ENCODE measurements at regions of chr3 and their contacts with region 1.

Region 1: DNA sequence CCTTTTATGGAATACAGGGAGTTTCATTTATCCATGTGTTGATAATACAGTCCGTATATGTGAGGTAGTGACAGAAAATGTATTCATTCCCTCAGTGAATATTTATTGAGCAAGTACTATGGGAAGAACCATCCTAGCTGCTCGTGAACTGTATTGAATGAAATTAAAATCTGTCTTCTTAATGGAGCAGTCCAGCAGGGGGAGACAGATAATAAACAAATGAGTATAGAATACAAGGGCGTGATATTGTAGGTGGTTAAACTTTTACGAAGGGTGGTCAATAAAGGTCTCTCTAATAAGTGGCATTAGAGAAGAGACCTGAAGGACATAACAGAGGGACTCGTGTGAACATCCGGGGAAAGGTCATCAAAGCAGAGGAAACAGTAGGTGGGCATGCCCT is 62.7 kb upstream of the OSTN start:
- DNase-seq: no peak
- ATAC-seq: peak; percentile 70
- H3K4me3 ChIP-seq: no peak overlapping the region
- H3K27ac ChIP-seq: no peak overlapping the region
- H3K4me1 ChIP-seq: peaks cover 24% of the 10 kb centered on the region
- H3K27me3 ChIP-seq: no peaks in the 10 kb centered on the region
- CTCF ChIP-seq: peak; percentile 43 to 51 (median 46); a peak in 4 of 6 replicates
- EP300 ChIP-seq: no peak
- POLR2A ChIP-seq: no peak
- RAD21 ChIP-seq: peak; percentile 76

Region 2: GRCh38 chr3:191066669-191067068 is 69.7 kb before region 1 on chr3:
- CTCF ChIA-PET with region 1: no interaction called
- POLR2A ChIA-PET with region 1: no interaction called
- RAD21 ChIA-PET with region 1: no interaction called
- SMC1A ChIA-PET with region 1: no interaction called
- in situ Hi-C with region 1: no loop called
- intact Hi-C with region 1: no loop called
- DNase-seq: peak; percentile 4
- ATAC-seq: no peak
- H3K4me3 ChIP-seq: no peak overlapping the region
- H3K27ac ChIP-seq: no peak overlapping the region
- H3K4me1 ChIP-seq: no peaks in the 10 kb centered on the region
- H3K27me3 ChIP-seq: no peaks in the 10 kb centered on the region
- CTCF ChIP-seq: no peak
- EP300 ChIP-seq: no peak
- POLR2A ChIP-seq: no peak
- RAD21 ChIP-seq: no peak

Region 3: DNA sequence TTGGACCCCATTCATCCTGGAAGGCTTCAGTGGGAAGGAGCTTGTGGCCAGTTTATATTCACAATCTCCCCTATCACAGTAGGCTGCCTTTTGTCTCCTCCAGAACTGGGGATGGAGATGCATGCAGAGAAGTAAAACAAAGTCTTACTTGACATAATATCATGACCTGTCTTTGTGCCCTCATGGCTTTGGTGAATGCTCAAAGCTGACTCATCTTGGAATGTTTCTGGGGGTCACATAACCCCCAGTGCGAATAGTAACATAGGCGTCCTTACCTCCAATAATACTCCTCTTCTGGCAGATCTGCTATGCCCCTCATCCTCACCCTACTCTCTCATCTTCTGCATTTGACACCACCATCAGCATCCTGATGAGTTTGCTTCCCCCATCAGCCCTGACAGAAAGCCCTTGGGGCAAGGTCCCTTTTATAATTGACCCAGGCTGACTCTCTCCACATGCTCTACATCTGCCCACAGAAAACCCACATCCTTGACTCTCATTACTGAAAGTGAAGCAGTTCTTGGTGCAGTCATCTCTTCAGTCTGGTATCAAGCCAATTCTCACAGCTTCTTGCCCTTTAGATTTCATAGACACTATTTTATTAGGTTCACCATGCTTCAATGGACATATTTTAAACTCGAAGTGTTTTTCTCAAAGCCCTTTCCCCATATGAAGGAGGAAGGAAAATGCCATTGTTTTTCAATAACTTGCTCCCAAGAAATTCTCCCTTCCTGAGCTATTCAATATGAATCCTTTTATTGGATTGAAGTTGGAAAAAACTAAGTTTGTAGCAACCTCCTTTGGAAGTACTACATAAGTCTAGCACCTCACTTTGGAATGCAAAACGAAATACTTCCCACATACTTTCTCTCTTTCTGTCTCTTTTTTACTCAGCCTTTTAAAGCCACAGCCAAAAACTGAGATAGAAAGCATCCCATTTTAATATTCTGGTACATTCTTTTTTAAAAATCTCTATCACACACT is 99.3 kb after region 1 on chr3:
- CTCF ChIA-PET with region 1: interaction called, 5 read pairs
- POLR2A ChIA-PET with region 1: interaction called, 3 read pairs
- RAD21 ChIA-PET with region 1: interaction called, 4 read pairs
- SMC1A ChIA-PET with region 1: interaction called, 5 read pairs
- in situ Hi-C with region 1: loop called (anchors 5 kb)
- intact Hi-C with region 1: loop called (anchors 2 kb)
- DNase-seq: peak; percentile 90
- ATAC-seq: peak; percentile 98
- H3K4me3 ChIP-seq: no peak overlapping the region
- H3K27ac ChIP-seq: peak overlapping the region; percentile 17; the same call in 1 of the 2 replicates
- H3K4me1 ChIP-seq: peaks cover 19% of the 10 kb centered on the region; the same call in 1 of the 2 replicates
- H3K27me3 ChIP-seq: no peaks in the 10 kb centered on the region
- CTCF ChIP-seq: no peak
- EP300 ChIP-seq: peak; percentile 64 to 68; a peak in 2 of 4 replicates
- POLR2A ChIP-seq: no peak
- RAD21 ChIP-seq: peak; percentile 30; the same call in 1 of the 2 replicates

Region 4: DNA sequence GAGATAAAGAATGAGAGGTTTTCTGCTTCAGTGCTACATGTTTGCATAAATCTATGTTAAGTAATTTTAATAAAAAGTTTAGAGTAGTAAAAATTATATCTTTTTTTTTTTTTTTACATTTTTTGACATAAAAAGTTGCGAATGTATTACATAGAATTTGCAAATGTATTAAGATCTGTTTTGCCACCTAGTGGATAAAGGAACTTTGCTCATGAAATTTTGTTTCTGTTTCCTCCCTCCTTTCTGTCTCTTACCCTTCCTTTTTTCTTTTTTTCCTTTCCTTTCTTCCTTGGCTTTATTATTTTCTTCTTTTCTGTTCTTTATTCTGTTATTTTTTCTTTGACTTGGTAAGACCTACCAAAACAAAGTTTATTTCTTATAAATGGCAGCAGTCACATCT is 252.5 kb after region 1 on chr3:
- CTCF ChIA-PET with region 1: interaction called, 5 read pairs
- POLR2A ChIA-PET with region 1: no interaction called
- RAD21 ChIA-PET with region 1: interaction called, 7 read pairs
- SMC1A ChIA-PET with region 1: interaction called, 6 read pairs
- in situ Hi-C with region 1: no loop called
- intact Hi-C with region 1: loop called (anchors 5 kb)
- DNase-seq: no peak
- ATAC-seq: no peak
- H3K4me3 ChIP-seq: no peak overlapping the region
- H3K27ac ChIP-seq: no peak overlapping the region
- H3K4me1 ChIP-seq: no peaks in the 10 kb centered on the region
- H3K27me3 ChIP-seq: no peaks in the 10 kb centered on the region
- CTCF ChIP-seq: peak in 2 of 3 experiments; percentile 21 to 38; a peak in 2 of 6 replicates
- EP300 ChIP-seq: no peak
- POLR2A ChIP-seq: no peak
- RAD21 ChIP-seq: peak; percentile 28; the same call in 1 of the 2 replicates

Measured in GM12878 (cell line).